Activated B cell treated with CpG ODN at 0.5 μM for 24 hours (primary cell): ENCODE measurements at regions of chr3 and their contacts with region 1.

Region 1: DNA sequence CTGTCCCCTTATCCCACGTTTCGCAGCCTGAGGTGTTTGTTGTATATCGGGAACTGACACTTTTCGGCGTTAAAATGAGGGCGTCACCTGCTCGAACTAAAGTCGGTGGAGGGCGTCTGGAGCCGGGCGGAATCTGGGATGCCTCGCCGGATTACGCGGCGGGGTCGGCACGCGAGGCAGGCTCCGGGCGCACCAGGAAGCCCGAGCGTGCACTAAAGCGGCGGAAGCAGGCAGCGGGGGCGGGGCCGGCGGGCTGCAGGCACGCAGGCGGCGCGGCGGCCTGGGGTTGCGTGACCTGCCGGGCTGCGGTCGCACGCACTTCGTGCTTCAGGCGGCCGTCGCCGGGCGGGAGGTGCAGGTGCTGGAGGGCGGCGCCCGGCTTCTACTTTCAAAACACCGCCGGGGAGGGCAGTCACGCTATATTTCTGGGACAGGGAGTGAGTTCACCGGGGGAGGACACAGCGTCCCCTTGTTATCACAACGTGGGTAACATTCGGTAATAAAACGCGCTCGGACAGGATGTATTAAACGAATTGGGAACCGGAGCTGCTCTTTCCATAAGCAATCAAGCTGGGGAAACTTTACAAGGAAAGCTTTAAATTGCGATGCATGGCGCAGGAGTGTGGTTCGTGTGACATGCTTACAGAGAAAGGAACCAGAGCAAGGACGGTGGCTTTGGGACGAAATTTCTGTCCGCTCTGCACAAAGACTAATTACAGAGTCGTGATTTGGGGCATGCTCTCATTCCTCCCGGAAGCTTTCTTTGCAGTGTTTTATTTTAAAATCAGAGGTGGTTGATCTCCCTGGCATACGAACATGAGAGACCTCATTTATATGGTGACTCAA is 9.1 kb upstream of the LEKR1 start:
- DNase-seq: peak; percentile 93
- ATAC-seq: peak; percentile 83
- H3K4me3 Mint-ChIP-seq: peak overlapping the region; percentile 94
- H3K27ac Mint-ChIP-seq: peak overlapping the region; percentile 99
- H3K4me1 Mint-ChIP-seq: peaks cover 42% of the 10 kb centered on the region
- H3K27me3 Mint-ChIP-seq: no peaks in the 10 kb centered on the region
- CTCF ChIP-seq: no peak

Region 2: DNA sequence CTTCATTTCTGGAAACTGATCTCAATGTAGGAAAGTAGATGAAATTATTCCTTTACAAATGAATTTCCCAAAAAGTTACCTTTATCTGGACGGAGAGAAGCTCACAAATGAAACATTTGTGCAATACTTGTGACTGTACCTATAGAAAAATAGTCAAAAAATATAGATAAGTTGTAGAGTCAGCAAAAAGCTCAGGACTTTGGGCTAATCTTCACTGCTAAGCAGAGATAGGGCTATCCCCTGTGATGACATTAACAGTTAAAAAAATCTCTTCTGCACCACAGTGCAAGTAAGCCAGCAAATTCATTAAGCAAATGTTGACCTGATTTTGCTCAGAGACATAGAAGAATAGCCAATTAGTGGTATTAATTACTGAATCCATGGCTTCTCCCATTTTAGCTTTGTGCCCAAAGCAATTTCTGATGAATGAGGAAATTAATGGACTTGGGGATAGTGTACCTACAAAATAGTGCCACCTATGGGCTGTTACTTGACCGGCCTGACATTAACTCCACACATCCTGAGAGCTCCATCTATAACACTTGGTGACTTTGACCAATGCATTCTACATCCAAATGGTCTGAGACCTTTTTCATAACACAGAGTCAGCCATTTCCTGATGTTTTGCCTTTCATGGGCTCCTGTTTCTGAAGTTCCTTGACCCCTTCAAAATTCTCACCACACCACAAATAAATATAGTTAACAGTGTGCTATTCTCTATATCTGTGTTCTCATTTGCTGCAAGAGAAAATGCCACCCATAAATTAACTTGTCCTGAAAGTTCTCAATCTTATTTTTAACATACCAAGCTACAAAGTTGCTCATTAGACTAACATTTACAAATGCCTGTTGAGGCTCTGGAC is 367.1 kb before region 1 on chr3:
- CTCF ChIA-PET with region 1: no interaction called
- POLR2A ChIA-PET with region 1: no interaction called
- intact Hi-C with region 1: no loop called
- DNase-seq: no peak
- ATAC-seq: no peak
- H3K4me3 Mint-ChIP-seq: no peak overlapping the region
- H3K27ac Mint-ChIP-seq: no peak overlapping the region
- H3K4me1 Mint-ChIP-seq: peaks cover 10% of the 10 kb centered on the region
- H3K27me3 Mint-ChIP-seq: peaks cover 13% of the 10 kb centered on the region
- CTCF ChIP-seq: no peak

Region 3: DNA sequence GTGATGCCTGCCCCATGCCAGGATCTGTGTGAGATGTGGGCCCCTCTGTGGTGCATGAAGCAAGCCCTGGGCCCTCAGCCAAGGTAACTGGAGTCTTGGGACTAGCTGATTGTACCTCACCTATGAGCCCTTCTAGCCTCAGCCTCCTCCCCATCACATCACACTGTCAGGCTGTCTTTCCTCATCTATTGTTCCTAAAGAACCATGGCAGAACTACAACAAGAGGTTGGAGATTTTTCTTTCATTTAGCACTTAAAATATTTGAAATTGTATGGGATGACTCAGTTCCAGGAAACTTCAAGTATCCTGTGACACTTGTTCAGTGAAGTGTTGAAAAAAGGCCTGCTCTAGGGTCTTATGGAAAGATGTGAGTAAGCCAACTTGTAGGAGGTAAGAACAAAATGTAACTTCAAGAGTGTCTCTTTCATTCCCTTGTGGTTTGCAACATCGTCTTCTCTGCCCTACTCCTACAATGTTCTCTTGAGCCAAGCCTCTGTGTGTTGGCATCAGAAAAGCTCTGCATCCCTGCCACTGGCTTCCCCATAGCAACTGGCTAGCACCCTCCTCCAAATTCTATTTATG is 201.3 kb before region 1 on chr3:
- CTCF ChIA-PET with region 1: no interaction called
- POLR2A ChIA-PET with region 1: no interaction called
- intact Hi-C with region 1: no loop called
- DNase-seq: no peak
- ATAC-seq: no peak
- H3K4me3 Mint-ChIP-seq: no peak overlapping the region
- H3K27ac Mint-ChIP-seq: no peak overlapping the region
- H3K4me1 Mint-ChIP-seq: no peaks in the 10 kb centered on the region
- H3K27me3 Mint-ChIP-seq: no peaks in the 10 kb centered on the region
- CTCF ChIP-seq: no peak

Region 4: DNA sequence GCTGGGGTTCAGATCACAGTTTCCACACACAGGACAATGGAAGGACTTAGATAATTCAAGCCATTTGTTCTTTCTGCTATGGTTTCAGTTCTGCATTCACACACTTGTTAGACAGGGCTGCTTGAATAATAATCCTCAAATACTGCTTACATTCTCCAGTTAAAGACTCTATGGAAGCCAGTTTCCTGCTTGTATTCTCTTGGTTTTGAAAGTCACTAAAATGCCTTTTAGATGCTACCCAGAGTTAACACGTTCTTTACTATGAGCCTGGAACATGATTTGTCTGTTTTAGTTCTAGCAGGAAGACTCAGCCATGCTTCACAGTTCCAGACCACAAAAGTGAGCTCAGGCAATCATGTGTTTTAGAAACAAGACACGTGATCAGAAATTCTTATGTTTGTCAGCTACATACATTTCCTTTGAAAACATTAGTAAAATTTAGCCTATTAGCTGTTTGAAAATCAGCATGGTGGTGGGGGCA is 161.5 kb after region 1 on chr3:
- CTCF ChIA-PET with region 1: interaction called, 3 read pairs
- POLR2A ChIA-PET with region 1: interaction called, 14 read pairs
- intact Hi-C with region 1: loop called (anchors 1 kb)
- DNase-seq: no peak
- ATAC-seq: peak; percentile 90
- H3K4me3 Mint-ChIP-seq: peak overlapping the region; percentile 61
- H3K27ac Mint-ChIP-seq: peak overlapping the region; percentile 95
- H3K4me1 Mint-ChIP-seq: peaks cover 51% of the 10 kb centered on the region
- H3K27me3 Mint-ChIP-seq: no peaks in the 10 kb centered on the region
- CTCF ChIP-seq: no peak